ENCODE measurements at regions of chr7 and their contacts with region 1.

Region 1: GRCh38 chr7:104758504-104758903 is 255.5 kb upstream of the KMT2E start:
- DNase-seq: no peak

Region 2: DNA sequence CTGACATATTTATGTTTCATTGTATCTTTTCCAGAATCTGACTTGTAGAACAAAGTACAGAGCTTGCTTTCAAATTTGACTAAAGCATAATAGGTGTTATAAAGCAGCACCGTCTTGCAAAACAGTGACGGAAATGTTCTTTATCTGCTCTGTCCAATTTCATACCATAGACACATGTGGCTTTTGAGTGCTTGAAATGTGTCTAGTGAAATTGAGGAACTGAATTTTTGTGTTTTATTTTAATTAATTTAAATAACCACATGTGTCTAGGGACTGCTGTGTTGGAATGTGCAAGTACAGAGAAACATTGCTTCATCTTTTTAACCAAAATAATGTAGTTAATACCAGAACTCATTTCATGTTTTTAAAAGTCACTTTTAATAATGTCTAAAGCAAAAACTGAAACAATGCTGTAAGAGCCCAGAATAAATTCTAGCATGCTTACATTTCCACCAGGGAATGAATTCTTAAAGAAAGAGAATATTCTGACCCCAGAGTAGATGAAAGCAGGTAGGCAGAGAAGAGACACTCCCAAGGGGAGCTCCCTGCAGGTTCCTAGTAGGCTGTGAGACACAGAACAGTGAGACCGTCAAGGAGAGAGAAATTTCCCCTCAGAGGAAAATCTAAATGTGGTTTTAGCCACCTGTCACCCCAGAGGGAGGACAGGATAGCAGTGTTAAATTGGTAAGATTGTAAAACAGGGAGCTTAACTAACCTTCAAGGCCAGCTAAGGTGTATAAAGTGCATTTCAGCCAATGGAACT is 80.2 kb after region 1 on chr7:
- intact Hi-C with region 1: loop called in 1 of 2 experiments (anchors 2 kb)
- DNase-seq: no peak

Measured in posterior vena cava (tissue), 2 donors.